ENCODE measurements at regions of chr15 and their contacts with region 1.

Region 1: DNA sequence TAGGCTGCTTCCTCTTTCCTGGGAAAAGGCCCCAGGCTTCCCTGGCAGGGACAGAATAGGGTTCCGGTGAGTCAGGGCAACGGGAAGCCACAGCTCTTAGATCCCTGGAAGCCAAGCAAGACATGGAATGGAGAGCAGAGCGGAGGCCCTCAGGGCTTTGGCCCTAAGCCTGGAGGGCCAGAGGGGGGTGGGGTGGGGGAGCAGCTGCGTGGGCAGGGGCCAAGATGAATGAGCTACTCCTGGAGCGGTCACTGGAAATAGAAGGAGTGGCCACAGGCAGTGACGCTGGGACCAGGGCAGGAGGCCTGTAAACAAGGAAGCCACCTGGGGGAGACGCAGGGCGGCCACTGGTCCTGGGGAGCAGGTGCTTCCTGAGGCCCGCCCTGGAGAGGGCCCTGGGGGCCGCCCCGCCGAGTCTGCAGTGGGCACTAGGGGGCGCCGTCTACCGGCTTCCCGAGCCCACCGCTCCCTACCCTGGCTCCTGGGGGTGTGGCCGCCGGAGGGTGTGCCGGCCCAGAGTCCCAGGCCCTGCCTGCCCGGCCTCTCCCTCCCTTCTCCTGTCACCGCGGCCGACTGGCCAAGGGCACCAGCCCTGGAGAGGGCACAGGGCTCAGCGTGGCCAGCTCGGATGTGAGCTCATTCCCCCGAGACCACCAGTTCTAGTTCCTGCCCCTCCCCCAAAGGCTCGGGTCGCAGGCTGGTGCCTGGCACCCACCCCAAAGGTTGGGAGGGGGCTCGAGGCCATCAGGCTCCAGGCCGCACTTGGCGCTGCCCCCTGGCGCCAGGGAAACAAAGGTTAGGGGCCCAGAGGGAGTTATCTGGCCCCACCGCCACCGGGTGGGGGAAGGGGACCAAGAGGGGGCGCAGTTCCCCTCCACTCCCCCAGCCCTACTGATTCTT is 12.1 kb downstream of the VPS18 start:
- DNase-seq: peak; percentile 90
- ATAC-seq: peak; percentile 80
- H3K4me3 Mint-ChIP-seq: peak overlapping the region; percentile 82
- H3K27ac Mint-ChIP-seq: peak overlapping the region; percentile 87
- H3K4me1 Mint-ChIP-seq: peaks cover 52% of the 10 kb centered on the region
- H3K27me3 Mint-ChIP-seq: no peaks in the 10 kb centered on the region
- CTCF ChIP-seq: peak; percentile 46

Region 2: DNA sequence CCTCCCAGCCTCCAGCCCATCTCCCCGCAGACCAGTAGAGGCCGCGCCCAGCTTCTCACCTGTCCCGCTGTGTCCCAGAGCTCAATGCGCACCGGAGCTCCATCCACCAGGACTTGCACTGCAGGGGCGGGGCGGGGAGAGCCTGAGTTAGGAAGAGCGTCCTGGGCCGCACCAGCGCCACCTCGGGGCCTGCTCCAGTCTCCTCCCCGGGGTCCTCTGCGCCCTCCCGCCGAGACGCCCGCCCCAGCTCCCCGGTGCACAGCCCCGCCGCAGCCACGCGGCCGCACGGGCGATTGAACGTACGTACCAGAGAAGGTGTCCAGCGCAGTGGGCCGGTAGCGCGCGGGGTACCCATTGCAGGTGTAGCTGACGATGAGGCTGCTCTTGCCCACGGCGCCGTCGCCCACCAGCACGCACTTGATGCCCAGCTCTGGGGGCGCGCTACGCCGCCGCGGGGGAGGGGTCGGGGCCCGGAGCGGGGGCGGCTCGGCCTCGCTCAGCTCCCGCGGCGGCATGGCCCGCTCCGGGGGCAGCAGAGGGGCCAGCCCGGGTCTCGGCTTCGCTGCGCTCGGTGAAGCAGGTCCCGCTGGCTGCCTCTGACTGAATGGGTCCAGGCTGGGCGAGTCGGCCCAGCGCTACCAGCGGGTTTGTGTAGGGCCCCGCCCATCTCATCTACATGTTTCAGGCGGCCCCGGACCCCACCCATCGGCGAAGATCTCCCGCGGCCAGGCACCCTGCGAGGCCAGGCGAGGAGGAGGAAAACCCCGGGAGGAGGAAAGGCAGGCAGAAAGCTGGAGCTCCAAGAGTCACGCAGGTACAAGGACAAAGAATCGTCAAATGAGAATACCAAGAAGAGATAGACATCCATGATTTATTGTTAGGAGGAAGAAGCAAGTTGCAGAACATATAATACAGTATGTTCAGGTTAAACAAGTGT is 32.4 kb before region 1 on chr15 and contains the start of gene RHOV:
- CTCF ChIA-PET with region 1: no interaction called
- POLR2A ChIA-PET with region 1: no interaction called
- intact Hi-C with region 1: no loop called
- DNase-seq: peak; percentile 51
- ATAC-seq: peak; percentile 77
- H3K4me3 Mint-ChIP-seq: peak within 1 kb of the TSS; percentile 77
- H3K27ac Mint-ChIP-seq: no peak within 1 kb of the TSS
- H3K4me1 Mint-ChIP-seq: peaks cover 28% of the 10 kb centered on the region
- H3K27me3 Mint-ChIP-seq: peaks cover 2% of the 10 kb centered on the region
- CTCF ChIP-seq: no peak
- total RNA-seq, gene RHOV: 0.27 TPM in 1 of 2 replicates, not detected in the other

Region 3: GRCh38 chr15:40893733-40894688 is 12.3 kb before region 1 on chr15 and contains the start of gene VPS18:
- CTCF ChIA-PET with region 1: interaction called, 51 read pairs
- POLR2A ChIA-PET with region 1: interaction called, 33 read pairs
- intact Hi-C with region 1: no loop called
- DNase-seq: peak; percentile 99
- ATAC-seq: peak; percentile 98
- H3K4me3 Mint-ChIP-seq: peak within 1 kb of the TSS; percentile 98
- H3K27ac Mint-ChIP-seq: peak within 1 kb of the TSS; percentile 90
- H3K4me1 Mint-ChIP-seq: peaks cover 34% of the 10 kb centered on the region
- H3K27me3 Mint-ChIP-seq: no peaks in the 10 kb centered on the region
- CTCF ChIP-seq: peak; percentile 94
- total RNA-seq, gene VPS18: 25.3 and 26.2 TPM in 2 replicates

Region 4: GRCh38 chr15:40952901-40953712 is 46.8 kb after region 1 on chr15 and contains the start of gene CHAC1:
- CTCF ChIA-PET with region 1: interaction called, 4 read pairs
- POLR2A ChIA-PET with region 1: interaction called, 20 read pairs
- intact Hi-C with region 1: loop called (anchors 1 kb)
- DNase-seq: peak; percentile 88
- ATAC-seq: peak; percentile 94
- H3K4me3 Mint-ChIP-seq: peak within 1 kb of the TSS; percentile 93
- H3K27ac Mint-ChIP-seq: peak within 1 kb of the TSS; percentile 92
- H3K4me1 Mint-ChIP-seq: peaks cover 23% of the 10 kb centered on the region
- H3K27me3 Mint-ChIP-seq: peaks cover 7% of the 10 kb centered on the region
- CTCF ChIP-seq: no peak
- total RNA-seq, gene CHAC1: 22.3 and 27.3 TPM in 2 replicates

Region 5: GRCh38 chr15:41056810-41057209 is 150.5 kb after region 1 on chr15:
- CTCF ChIA-PET with region 1: no interaction called
- POLR2A ChIA-PET with region 1: no interaction called
- intact Hi-C with region 1: no loop called
- DNase-seq: no peak
- ATAC-seq: no peak
- H3K4me3 Mint-ChIP-seq: no peak overlapping the region
- H3K27ac Mint-ChIP-seq: no peak overlapping the region
- H3K4me1 Mint-ChIP-seq: no peaks in the 10 kb centered on the region
- H3K27me3 Mint-ChIP-seq: no peaks in the 10 kb centered on the region
- CTCF ChIP-seq: no peak

Region 6: DNA sequence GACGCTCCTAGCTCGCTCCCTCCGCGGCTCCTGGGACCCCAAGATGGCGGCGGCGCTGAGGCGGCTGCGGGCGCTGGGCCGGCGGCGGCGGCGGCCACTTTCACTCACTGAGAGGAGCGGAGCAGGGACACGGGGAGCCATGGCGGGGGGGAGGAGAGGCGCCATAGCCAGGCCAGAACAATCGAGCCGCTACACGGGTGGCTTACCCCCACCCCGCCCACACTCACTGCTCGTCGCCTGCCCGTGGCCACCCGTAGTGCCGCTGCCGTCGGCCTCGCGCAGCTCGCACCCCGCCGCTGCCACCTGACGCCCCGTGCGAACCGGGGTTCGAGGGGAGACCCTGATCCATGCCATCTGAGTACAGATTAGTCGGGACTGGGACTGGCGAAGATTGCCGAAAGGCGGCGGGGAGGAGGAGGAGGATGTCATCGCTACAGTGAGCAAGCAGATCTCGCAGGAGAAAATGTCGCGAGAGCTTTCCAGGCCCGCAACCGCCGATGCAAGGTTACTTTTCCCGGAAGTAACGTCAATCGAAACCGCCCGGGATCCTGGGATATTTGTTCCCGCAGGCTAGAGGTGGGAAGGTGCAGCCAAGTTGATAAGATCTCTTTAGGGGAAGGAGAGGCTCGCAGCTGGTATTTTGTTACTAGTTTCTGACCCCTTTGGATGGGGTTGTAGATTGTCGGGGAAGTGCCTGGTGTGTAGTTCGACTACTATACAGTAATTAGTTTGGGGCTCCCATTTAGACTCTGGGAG is 210.0 kb after region 1 on chr15 and contains the start of gene INO80:
- CTCF ChIA-PET with region 1: no interaction called
- POLR2A ChIA-PET with region 1: interaction called, 6 read pairs
- intact Hi-C with region 1: loop called (anchors 1 kb)
- DNase-seq: peak; percentile 93
- ATAC-seq: peak; percentile 70
- H3K4me3 Mint-ChIP-seq: peak within 1 kb of the TSS; percentile 97
- H3K27ac Mint-ChIP-seq: peak within 1 kb of the TSS; percentile 100
- H3K4me1 Mint-ChIP-seq: peaks cover 32% of the 10 kb centered on the region
- H3K27me3 Mint-ChIP-seq: no peaks in the 10 kb centered on the region
- CTCF ChIP-seq: no peak
- total RNA-seq, gene INO80: 34.8 and 38.8 TPM in 2 replicates

Region 7: GRCh38 chr15:41283653-41284426 is 377.5 kb after region 1 on chr15:
- CTCF ChIA-PET with region 1: no interaction called
- POLR2A ChIA-PET with region 1: interaction called, 7 read pairs
- intact Hi-C with region 1: loop called (anchors 2 kb)
- DNase-seq: peak; percentile 94
- ATAC-seq: peak; percentile 98
- H3K4me3 Mint-ChIP-seq: peak overlapping the region; percentile 93
- H3K27ac Mint-ChIP-seq: peak overlapping the region; percentile 94
- H3K4me1 Mint-ChIP-seq: peaks cover 42% of the 10 kb centered on the region
- H3K27me3 Mint-ChIP-seq: no peaks in the 10 kb centered on the region
- CTCF ChIP-seq: no peak

Region 8: DNA sequence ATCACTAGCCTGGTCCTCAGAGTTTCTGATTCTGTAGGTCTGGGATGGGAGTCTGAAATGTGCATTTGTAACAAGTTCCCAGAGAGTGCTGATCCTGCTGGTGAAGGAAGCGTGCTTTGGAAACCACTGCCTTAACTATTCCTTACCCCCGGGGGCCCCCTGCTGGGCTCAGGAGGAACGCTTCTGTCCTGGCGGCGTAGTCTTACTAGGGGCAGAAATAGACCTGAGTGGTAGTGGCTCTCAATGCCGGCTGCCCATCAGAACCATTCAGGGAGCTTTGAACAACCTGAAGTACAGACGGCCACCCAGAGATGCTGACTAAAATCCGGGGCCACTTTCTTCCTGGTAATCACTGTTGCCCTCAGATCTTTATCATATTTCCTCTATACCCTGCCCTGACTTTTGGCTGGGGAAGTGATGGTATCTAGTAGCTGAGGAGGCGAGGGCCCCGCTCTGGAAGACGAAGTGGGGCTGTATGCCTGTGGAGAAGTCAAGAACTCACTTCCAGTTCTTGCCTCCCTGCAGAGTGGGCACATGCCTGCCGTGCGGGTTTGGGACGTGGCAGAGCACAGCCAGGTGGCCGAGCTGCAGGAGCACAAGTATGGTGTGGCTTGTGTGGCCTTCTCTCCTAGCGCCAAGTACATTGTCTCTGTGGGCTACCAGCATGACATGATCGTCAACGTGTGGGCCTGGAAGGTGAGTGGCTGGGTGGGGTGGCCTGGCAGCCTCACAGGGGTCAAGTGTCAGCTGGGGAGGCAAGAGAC is 905.3 kb after region 1 on chr15:
- CTCF ChIA-PET with region 1: no interaction called
- POLR2A ChIA-PET with region 1: no interaction called
- intact Hi-C with region 1: loop called (anchors 1 kb)
- DNase-seq: peak; percentile 67
- ATAC-seq: peak; percentile 97
- H3K4me3 Mint-ChIP-seq: no peak overlapping the region
- H3K27ac Mint-ChIP-seq: no peak overlapping the region
- H3K4me1 Mint-ChIP-seq: peaks cover 11% of the 10 kb centered on the region
- H3K27me3 Mint-ChIP-seq: no peaks in the 10 kb centered on the region
- CTCF ChIP-seq: peak; percentile 85

Measured in activated B cell treated with CpG ODN at 0.5 μM for 24 hours (primary cell).